ENCODE measurements at regions of chr2 and their contacts with region 1.

Region 1: DNA sequence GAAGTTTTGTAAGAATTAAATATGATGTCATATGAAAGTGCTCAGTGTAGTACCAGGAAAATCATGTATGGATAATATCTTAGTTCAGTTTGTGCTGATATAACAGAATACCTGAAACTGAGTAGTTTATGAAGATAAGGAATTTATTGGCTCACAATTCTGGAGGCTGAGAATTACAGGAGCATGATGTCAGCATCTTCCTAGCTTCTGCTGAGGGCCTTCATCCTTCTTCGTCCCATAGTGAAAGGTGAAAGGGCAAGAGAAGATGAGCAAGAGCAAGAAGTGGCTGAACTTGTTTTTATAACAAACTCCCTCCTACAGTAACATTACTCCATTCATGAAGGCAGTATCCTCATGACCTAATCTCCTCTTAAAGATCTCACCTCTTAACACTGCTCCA is 985.3 kb downstream of the DCDC2C start:
- DNase-seq: no peak
- H3K4me3 ChIP-seq: no peak overlapping the region
- CTCF ChIP-seq: no peak

Region 2: DNA sequence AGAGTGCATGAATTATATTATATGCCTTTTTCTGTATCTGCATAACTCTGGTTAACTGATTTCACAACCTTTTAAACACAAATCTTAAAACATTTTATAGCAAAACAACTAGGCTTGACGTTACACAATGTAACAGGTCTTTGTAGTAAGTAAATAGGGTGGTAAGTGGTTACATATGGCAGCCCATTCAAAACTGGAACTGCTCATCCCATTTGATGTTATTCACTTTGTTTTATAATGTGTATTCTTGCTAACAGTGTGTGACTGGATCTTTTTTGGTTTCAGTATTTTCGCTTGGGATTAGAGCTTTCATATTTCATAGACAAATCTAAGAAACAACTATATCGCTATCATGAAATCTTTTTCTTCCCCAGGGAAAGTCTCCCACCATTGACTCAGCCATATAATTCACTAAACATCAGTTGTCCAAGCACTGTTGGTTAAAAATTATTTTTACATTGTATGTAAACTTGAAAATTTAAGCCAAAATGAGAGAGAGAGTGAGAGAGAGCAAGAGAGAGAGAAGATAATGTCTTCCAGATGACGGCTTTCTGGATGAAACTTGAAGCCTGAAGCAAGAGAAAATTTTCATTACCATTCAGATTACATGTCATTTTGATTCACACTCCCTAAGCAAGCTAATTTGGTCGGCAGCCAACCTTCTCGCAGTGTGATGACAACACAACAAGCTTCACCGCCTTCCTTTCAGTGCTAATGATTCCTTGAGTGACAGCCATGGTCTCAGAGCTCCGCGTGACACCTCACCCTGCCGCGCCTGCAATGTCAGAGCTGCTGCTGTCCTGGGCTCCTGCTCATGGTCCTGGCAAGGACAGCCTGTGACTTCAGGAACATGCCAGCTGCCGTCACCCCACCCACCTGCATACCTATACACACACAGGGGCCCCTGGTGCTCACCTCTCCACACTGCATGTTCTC is 56.7 kb after region 1 on chr2:
- in situ Hi-C with region 1: loop called (anchors 5 kb)
- DNase-seq: no peak
- H3K4me3 ChIP-seq: no peak overlapping the region
- CTCF ChIP-seq: no peak

Measured in astrocyte of the cerebellum (primary cell).